ENCODE measurements at regions of chr15 and their contacts with region 1.

Region 1: DNA sequence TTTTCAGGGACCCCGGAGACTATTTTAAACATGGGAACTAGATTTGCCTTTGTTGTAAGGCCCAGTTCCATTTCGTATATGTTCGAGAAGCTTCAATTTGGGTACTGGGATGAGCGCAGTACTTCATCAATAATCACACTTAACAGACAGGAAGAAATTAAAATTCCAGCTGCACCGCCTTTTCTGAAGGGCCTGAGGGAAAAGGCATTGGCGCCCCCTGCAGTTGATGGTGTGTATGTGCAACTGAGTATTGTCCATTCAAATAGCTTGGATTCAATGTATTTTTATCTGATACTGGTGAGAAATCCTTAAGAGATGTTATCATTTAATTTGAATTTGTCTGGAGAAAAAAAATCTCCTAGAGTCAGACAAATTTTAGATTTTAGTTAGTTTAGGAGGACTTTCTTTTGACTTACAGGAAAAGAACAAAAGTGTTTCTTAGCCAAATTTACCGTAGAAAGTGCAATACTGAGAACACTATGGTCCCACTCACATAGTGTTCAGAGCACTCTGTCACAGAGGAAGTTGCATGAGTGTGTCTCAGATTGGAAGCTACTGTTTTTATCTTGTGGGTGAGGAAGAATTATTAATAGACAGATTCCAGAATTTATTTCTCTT is 5.4 kb upstream of the ALDH1A2 start:
- DNase-seq: peak; percentile 63
- ATAC-seq: no peak
- H3K4me3 Mint-ChIP-seq: no peak overlapping the region
- H3K27ac Mint-ChIP-seq: no peak overlapping the region
- H3K4me1 Mint-ChIP-seq: peaks cover 3% of the 10 kb centered on the region
- H3K27me3 Mint-ChIP-seq: peaks cover 33% of the 10 kb centered on the region

Region 2: GRCh38 chr15:57732526-57733331 is 338.2 kb before region 1 on chr15:
- CTCF ChIA-PET with region 1: interaction called, 11 read pairs
- POLR2A ChIA-PET with region 1: no interaction called
- DNase-seq: peak; percentile 57
- ATAC-seq: peak; percentile 69
- H3K4me3 Mint-ChIP-seq: no peak overlapping the region
- H3K27ac Mint-ChIP-seq: no peak overlapping the region
- H3K4me1 Mint-ChIP-seq: no peaks in the 10 kb centered on the region
- H3K27me3 Mint-ChIP-seq: no peaks in the 10 kb centered on the region

Region 3: DNA sequence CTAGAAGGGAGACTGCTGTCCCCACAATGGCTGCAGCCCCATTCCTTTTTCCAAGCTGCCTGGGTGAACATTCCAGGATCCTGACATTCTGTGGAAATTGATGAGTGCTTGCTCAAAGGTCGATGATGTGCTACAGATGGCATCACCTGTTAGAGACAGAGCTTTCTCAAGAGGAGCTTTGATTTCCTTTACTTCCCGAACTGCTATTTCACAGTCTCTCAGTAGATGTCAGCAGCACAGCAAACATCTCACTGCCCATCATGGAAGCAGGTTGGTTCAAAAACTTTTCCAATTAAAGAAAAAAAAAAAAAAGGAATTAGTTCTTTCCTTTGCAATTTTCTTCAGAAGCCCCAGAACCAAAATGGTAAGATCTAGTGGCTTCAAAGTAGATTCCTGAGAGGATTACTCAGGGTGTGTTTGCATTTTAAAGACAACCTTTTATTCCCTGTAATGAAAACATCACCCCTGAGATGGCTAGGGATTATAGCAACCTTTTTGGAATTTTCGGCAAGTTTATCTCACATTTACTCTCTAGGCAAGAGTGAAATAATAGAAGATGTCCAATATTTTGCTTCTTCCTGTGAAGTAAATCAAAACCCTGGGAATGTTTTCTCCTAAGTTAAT is 319.6 kb before region 1 on chr15:
- CTCF ChIA-PET with region 1: interaction called, 24 read pairs
- POLR2A ChIA-PET with region 1: no interaction called
- DNase-seq: no peak
- ATAC-seq: no peak
- H3K4me3 Mint-ChIP-seq: no peak overlapping the region
- H3K27ac Mint-ChIP-seq: no peak overlapping the region
- H3K4me1 Mint-ChIP-seq: peaks cover 8% of the 10 kb centered on the region
- H3K27me3 Mint-ChIP-seq: no peaks in the 10 kb centered on the region

Region 4: DNA sequence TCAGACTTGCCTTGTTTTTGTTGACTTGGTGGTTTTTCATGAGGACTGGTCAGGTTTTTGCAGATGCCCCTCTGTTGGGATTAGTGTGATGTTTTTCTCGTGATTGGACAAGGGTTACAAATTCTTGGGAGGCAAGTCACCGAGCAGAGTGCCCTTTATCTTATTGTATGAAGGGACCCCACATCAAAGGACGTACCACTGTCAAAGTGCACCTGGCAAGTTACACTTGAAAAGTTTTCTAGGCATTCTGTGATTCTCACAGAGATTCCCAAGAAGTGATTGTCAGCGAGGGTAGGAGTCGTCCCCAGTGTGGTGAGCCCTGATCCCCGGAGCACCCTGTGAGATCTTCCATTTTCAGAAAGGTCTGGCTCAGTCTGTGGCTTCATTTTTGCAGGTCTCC is 254.3 kb before region 1 on chr15:
- CTCF ChIA-PET with region 1: no interaction called
- POLR2A ChIA-PET with region 1: no interaction called
- DNase-seq: no peak
- ATAC-seq: no peak
- H3K4me3 Mint-ChIP-seq: no peak overlapping the region
- H3K27ac Mint-ChIP-seq: no peak overlapping the region
- H3K4me1 Mint-ChIP-seq: no peaks in the 10 kb centered on the region
- H3K27me3 Mint-ChIP-seq: peaks cover 21% of the 10 kb centered on the region

Region 5: GRCh38 chr15:58058729-58059128 is 12.2 kb before region 1 on chr15:
- CTCF ChIA-PET with region 1: interaction called, 23 read pairs
- POLR2A ChIA-PET with region 1: no interaction called
- DNase-seq: no peak
- ATAC-seq: no peak
- H3K4me3 Mint-ChIP-seq: no peak overlapping the region
- H3K27ac Mint-ChIP-seq: no peak overlapping the region
- H3K4me1 Mint-ChIP-seq: no peaks in the 10 kb centered on the region
- H3K27me3 Mint-ChIP-seq: peaks cover 55% of the 10 kb centered on the region

Region 6: GRCh38 chr15:58124585-58124984 is 53.7 kb after region 1 on chr15:
- CTCF ChIA-PET with region 1: no interaction called
- POLR2A ChIA-PET with region 1: no interaction called
- DNase-seq: no peak
- ATAC-seq: no peak
- H3K4me3 Mint-ChIP-seq: no peak overlapping the region
- H3K27ac Mint-ChIP-seq: no peak overlapping the region
- H3K4me1 Mint-ChIP-seq: no peaks in the 10 kb centered on the region
- H3K27me3 Mint-ChIP-seq: peaks cover 4% of the 10 kb centered on the region

Region 7: DNA sequence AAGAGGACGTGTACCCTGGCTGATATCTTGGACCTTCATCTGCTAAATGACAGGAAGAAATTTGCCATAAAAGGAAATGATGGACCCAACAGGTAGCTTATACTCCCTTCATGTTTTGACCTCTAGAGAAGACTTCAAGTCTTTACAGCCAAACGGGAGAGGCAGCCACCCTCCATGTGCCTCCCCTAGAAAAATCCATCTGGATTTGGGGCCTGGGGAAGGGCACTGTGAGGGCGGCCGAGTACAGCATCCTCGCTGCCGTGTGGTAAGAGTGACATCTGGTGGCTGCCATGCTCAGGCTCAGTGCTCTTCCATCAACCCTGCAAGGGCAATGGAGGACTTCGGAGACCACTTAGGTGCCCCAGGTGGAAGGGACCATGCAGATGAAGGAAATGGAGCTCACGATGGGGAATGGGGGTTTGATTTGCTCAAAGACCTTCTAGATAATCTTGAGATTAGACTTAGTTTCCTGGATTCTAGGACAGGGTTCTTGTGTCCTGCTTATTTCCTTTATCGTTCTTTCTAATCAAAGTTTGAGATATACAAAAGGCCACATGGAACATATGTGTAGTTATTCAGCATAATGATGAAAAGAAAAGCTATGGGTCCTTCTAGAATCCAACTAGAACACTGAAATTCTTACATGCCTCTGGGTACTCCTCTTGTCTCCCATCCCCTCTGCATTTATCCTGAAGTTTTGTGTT is 111.7 kb after region 1 on chr15:
- CTCF ChIA-PET with region 1: interaction called, 13 read pairs
- POLR2A ChIA-PET with region 1: no interaction called
- DNase-seq: peak; percentile 40
- ATAC-seq: peak; percentile 73
- H3K4me3 Mint-ChIP-seq: no peak overlapping the region
- H3K27ac Mint-ChIP-seq: no peak overlapping the region
- H3K4me1 Mint-ChIP-seq: peaks cover 6% of the 10 kb centered on the region
- H3K27me3 Mint-ChIP-seq: peaks cover 24% of the 10 kb centered on the region

Measured in activated CD8-positive, alpha-beta T cell treated with anti-CD3 and anti-CD28 coated beads, Interleukin-2, amount 10 ng/mL, durations not matched to agents 7 days and 5 days (primary cell).